IMR-90 (cell line): ENCODE measurements at regions of chr11 and their contacts with region 1.

Region 1: DNA sequence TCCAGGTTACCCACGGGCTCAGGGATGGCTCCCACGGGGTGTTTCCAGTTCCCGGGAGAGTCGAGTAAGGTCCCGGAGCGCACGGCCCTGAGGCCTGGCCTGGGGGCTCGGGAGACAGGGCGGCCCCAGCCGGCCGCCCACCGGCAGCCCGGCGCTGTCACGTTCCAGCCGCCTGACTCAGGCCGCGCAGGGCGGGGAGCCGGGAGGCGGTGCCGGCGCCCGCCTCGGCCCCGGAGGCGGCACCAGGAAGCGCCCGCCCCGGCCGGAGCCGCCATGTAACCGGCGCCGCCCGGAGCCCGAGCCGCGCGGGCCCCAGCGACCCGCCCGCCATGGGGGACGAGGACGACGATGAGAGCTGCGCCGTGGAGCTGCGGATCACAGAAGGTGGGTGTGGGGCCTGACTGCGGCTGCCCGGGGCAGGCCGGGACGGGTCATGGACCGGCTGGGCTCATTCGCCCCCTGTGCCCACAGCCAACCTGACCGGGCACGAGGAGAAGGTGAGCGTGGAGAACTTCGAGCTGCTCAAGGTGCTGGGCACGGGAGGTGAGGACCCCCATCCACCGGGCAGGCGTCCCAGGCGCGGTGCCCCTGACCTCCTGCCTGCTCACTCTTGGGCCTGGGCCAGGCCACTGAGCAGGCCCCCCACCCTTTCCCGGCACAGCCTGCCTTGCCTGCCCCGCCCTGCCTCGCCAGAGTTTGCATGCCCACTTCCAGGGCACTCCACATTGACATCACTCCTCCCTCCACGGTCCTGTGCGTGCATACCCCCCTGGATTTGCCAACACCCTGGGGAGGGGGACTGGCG is at the start of gene RPS6KA4:
- DNase-seq: peak; percentile 58
- ATAC-seq: peak; percentile 88
- H3K4me3 ChIP-seq: peak within 1 kb of the TSS; percentile 98
- H3K27ac ChIP-seq: peak within 1 kb of the TSS; percentile 91
- H3K4me1 ChIP-seq: peaks cover 27% of the 10 kb centered on the region
- H3K27me3 ChIP-seq: no peaks in the 10 kb centered on the region
- CTCF ChIP-seq: no peak
- POLR2A ChIP-seq: peak; percentile 47; the same call in 1 of the 2 replicates
- RAD21 ChIP-seq: no peak
- total RNA-seq, gene RPS6KA4: 43.3 and 52.9 TPM in 2 replicates

Region 2: GRCh38 chr11:64317957-64318693 is 41.0 kb before region 1 on chr11 and contains the start of gene PRDX5:
- CTCF ChIA-PET with region 1: interaction called, 27 read pairs
- POLR2A ChIA-PET with region 1: interaction called, 4 read pairs
- dilution Hi-C with region 1: no loop called
- in situ Hi-C with region 1: no loop called
- intact Hi-C with region 1: loop called (anchors 1 kb)
- DNase-seq: peak; percentile 94
- ATAC-seq: peak; percentile 92
- H3K4me3 ChIP-seq: peak within 1 kb of the TSS; percentile 67
- H3K27ac ChIP-seq: peak within 1 kb of the TSS; percentile 79
- H3K4me1 ChIP-seq: peaks cover 6% of the 10 kb centered on the region
- H3K27me3 ChIP-seq: no peaks in the 10 kb centered on the region
- CTCF ChIP-seq: peak; percentile 48
- POLR2A ChIP-seq: peak; percentile 66
- RAD21 ChIP-seq: peak; percentile 47
- total RNA-seq, gene PRDX5: 120 and 160 TPM in 2 replicates

Region 3: GRCh38 chr11:64331557-64332371 is 27.3 kb before region 1 on chr11:
- CTCF ChIA-PET with region 1: interaction called, 17 read pairs
- POLR2A ChIA-PET with region 1: no interaction called
- dilution Hi-C with region 1: no loop called
- in situ Hi-C with region 1: no loop called
- intact Hi-C with region 1: no loop called
- DNase-seq: peak; percentile 87
- ATAC-seq: peak; percentile 84
- H3K4me3 ChIP-seq: no peak overlapping the region
- H3K27ac ChIP-seq: no peak overlapping the region
- H3K4me1 ChIP-seq: peaks cover 7% of the 10 kb centered on the region
- H3K27me3 ChIP-seq: no peaks in the 10 kb centered on the region; the same call in 1 of the 2 replicates
- CTCF ChIP-seq: peak; percentile 69
- POLR2A ChIP-seq: no peak
- RAD21 ChIP-seq: peak; percentile 60

Region 4: GRCh38 chr11:64341851-64342791 is 17.0 kb before region 1 on chr11:
- CTCF ChIA-PET with region 1: interaction called, 11 read pairs
- POLR2A ChIA-PET with region 1: no interaction called
- dilution Hi-C with region 1: no loop called
- in situ Hi-C with region 1: no loop called
- intact Hi-C with region 1: no loop called
- DNase-seq: peak; percentile 81
- ATAC-seq: peak; percentile 99
- H3K4me3 ChIP-seq: peak overlapping the region; percentile 45
- H3K27ac ChIP-seq: peak overlapping the region; percentile 72
- H3K4me1 ChIP-seq: peaks cover 6% of the 10 kb centered on the region
- H3K27me3 ChIP-seq: peaks cover 11% of the 10 kb centered on the region; the same call in 1 of the 2 replicates
- CTCF ChIP-seq: peak; percentile 62
- POLR2A ChIP-seq: no peak
- RAD21 ChIP-seq: peak; percentile 30

Region 5: DNA sequence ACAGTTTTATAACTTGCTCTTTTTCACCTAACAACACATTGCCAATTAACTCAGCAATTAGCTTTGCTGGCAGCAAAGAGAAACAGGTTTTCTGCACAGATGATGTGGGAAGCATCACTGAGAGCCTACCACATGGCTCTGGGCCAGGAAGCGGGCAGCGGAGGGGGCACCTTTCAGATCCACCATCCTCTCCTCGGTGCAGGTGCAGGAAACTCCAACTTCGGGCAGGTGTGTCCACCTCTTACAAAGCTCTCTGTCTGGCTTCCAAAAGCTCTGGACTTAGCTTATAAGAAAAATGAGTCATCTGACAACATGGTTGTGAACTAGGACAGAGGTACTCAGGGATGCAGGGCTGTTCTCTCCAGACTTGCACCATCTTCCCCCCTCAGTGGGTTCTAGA is 76.9 kb after region 1 on chr11:
- CTCF ChIA-PET with region 1: no interaction called
- POLR2A ChIA-PET with region 1: no interaction called
- dilution Hi-C with region 1: no loop called
- in situ Hi-C with region 1: no loop called
- intact Hi-C with region 1: no loop called
- DNase-seq: no peak
- ATAC-seq: no peak
- H3K4me3 ChIP-seq: no peak overlapping the region
- H3K27ac ChIP-seq: no peak overlapping the region
- H3K4me1 ChIP-seq: no peaks in the 10 kb centered on the region
- H3K27me3 ChIP-seq: peaks cover 64% of the 10 kb centered on the region
- CTCF ChIP-seq: no peak
- POLR2A ChIP-seq: no peak
- RAD21 ChIP-seq: no peak

Region 6: DNA sequence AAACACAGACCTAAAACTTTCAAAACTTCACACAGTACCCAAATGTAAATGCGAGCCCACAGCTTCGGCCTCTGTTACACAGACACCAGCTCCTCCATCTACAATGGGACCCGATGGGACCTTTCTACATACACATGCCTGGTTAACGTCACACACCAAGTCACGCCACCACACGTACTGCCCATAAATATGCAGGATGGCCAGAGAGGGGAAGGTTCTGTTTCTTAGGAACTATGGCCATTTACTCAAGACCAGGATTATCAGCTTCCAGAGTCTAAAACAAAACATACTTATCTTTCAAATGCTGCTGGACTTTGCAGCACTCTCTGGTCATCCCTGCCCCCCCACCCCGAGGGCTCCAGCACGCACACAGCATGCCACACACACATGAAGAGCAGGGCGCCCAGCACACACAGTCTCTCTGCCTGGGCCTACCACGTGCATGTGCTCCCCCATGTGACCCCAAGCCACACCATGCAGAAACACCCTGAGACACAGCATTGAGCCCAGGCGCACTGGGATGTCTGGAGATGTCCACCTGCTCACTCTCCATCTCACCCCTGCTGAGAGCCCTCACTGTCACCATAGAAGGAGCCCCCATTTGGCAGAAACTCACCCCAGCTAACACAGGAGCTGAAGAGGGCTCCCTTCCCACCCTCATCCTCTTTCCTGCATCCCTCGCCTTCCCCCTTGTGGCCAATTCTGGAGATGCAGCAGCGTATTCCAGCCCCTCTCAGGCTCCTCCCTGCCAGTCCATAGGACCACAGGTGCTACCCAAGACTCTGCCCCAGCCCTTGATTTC is 293.7 kb after region 1 on chr11:
- CTCF ChIA-PET with region 1: no interaction called
- POLR2A ChIA-PET with region 1: no interaction called
- dilution Hi-C with region 1: no loop called
- in situ Hi-C with region 1: no loop called
- intact Hi-C with region 1: loop called (anchors 5 kb)
- DNase-seq: peak; percentile 55
- ATAC-seq: peak; percentile 97
- H3K4me3 ChIP-seq: no peak overlapping the region
- H3K27ac ChIP-seq: no peak overlapping the region
- H3K4me1 ChIP-seq: no peaks in the 10 kb centered on the region
- H3K27me3 ChIP-seq: peaks cover 41% of the 10 kb centered on the region
- CTCF ChIP-seq: peak; percentile 93
- POLR2A ChIP-seq: no peak
- RAD21 ChIP-seq: peak; percentile 86

Region 7: GRCh38 chr11:64878494-64879243 is 519.6 kb after region 1 on chr11 and contains the start of gene EHD1:
- CTCF ChIA-PET with region 1: no interaction called
- POLR2A ChIA-PET with region 1: interaction called, 13 read pairs
- dilution Hi-C with region 1: no loop called
- in situ Hi-C with region 1: no loop called
- intact Hi-C with region 1: no loop called
- DNase-seq: peak; percentile 96
- ATAC-seq: peak; percentile 93
- H3K4me3 ChIP-seq: peak within 1 kb of the TSS; percentile 95
- H3K27ac ChIP-seq: peak within 1 kb of the TSS; percentile 84
- H3K4me1 ChIP-seq: peaks cover 15% of the 10 kb centered on the region
- H3K27me3 ChIP-seq: no peaks in the 10 kb centered on the region
- CTCF ChIP-seq: peak; percentile 80
- POLR2A ChIP-seq: peak; percentile 100
- RAD21 ChIP-seq: peak; percentile 43
- total RNA-seq, gene EHD1: 107 and 125 TPM in 2 replicates